ENCODE measurements at regions of chr5 and their contacts with region 1.

Region 1: DNA sequence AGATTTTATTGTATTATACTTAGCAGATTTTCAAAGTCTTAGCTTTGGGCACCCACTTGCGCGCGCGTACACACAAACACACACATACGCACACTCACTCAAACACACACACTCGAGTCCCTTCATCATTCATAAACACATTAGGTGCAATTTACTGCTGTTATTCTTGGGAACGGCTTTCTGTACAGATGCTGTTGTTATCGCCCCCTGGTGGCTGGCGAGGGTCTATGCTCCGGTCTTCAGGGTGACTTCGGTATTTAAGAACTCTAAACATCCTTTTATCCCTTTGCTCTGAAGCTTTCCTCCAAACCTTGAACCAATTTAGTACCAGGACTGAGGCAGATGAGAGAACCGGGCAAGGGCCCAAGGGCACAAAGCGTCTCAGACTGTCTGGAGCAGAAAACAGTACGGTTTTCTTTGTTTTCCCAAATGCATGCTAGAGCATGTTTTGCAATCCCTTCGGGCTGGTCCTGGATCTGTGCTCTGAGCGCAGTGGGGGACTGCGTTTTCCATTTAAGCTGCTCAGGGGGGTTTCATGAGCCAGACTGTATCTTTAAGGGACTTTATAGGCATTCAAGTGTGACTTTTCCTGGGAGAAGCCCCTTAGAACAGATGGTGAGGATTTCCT is 1.7 kb upstream of the SLIT3 start:
- DNase-seq: peak; percentile 76
- ATAC-seq: peak; percentile 30

Region 2: GRCh38 chr5:168268949-168269943 is 1033.4 kb before region 1 on chr5:
- intact Hi-C with region 1: loop called (anchors 10 kb)
- DNase-seq: peak; percentile 80
- ATAC-seq: peak; percentile 85

Region 3: DNA sequence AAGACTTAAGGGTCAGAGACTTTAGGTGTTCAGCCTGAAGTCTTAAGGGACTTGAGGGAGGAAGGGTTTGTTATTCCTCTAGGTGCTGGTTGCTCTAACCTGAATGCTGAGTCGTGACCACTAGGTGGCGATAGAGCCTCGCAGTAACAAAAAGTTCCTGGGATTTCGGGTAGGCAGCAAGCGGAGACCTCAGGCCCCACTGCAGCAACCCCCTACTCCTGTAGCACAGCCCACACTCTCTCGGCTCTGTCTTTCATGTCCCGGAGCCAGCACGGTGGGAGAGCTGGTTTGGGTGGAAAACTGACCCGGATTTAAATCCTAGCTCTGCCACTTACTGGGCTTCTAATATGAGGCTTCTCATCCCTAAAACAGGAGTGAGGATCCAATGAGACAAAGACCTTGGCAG is 623.1 kb before region 1 on chr5:
- intact Hi-C with region 1: loop called (anchors 2 kb)
- DNase-seq: peak; percentile 73
- ATAC-seq: peak; percentile 41

Region 4: GRCh38 chr5:168879929-168880328 is 422.7 kb before region 1 on chr5:
- intact Hi-C with region 1: no loop called
- DNase-seq: no peak
- ATAC-seq: peak; percentile 62

Region 5: GRCh38 chr5:168987543-168988300 is 314.9 kb before region 1 on chr5:
- intact Hi-C with region 1: loop called (anchors 2 kb)
- DNase-seq: peak; percentile 81
- ATAC-seq: peak; percentile 56

Region 6: GRCh38 chr5:169116961-169117461 is 185.6 kb before region 1 on chr5:
- intact Hi-C with region 1: loop called (anchors 10 kb)
- DNase-seq: no peak
- ATAC-seq: peak; percentile 66

Region 7: GRCh38 chr5:169374761-169375160 is 72.2 kb after region 1 on chr5:
- intact Hi-C with region 1: no loop called
- DNase-seq: no peak
- ATAC-seq: no peak

Region 8: DNA sequence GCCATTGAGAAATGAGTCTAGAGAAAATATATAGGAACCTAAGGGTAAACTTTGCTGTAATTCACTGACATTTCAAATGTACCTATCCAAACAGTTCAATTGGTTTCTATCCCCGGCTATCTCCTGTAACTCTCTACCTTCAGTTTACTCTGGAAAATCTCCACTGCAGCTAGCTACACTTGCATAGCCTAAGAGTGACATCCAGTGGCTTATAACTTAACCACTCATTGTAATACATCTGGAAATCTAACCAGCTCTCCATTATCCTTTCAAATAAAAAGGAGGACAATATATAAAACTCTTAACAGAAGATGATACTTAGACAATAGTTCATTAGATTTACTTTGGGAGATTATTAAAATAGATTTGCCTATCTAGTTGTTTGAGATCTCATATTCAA is 245.7 kb after region 1 on chr5:
- intact Hi-C with region 1: loop called (anchors 5 kb)
- DNase-seq: no peak
- ATAC-seq: peak; percentile 88

Measured in Right ventricle myocardium inferior (tissue), 1 donor.